Posterior vena cava (tissue), 2 donors: ENCODE measurements at regions of chr14 and their contacts with region 1.

Region 1: GRCh38 chr14:75794615-75795038 is 133.6 kb downstream of the TTLL5 start:
- DNase-seq: no peak

Region 2: GRCh38 chr14:75711104-75711795 is 83.4 kb before region 1 on chr14:
- intact Hi-C with region 1: loop called (anchors 1 to 10 kb)
- DNase-seq: no peak